Activated CD8-positive, alpha-beta memory T cell treated with anti-CD3 and anti-CD28 coated beads, Interleukin-2, amount 10 ng/mL, durations not matched to agents 7 days and 5 days (primary cell): ENCODE measurements at regions of chr6 and their contacts with region 1.

Region 1: GRCh38 chr6:31079656-31080261 is 32.6 kb downstream of the C6orf15 start:
- DNase-seq: peak; percentile 80
- ATAC-seq: peak; percentile 82
- H3K4me3 Mint-ChIP-seq: peak overlapping the region; percentile 28
- H3K27ac Mint-ChIP-seq: peak overlapping the region; percentile 43
- H3K4me1 Mint-ChIP-seq: peaks cover 3% of the 10 kb centered on the region
- H3K27me3 Mint-ChIP-seq: peaks cover 15% of the 10 kb centered on the region

Region 2: GRCh38 chr6:31068669-31069340 is 11.0 kb before region 1 on chr6:
- CTCF ChIA-PET with region 1: interaction called, 23 read pairs
- DNase-seq: peak; percentile 85
- ATAC-seq: peak; percentile 99
- H3K4me3 Mint-ChIP-seq: no peak overlapping the region
- H3K27ac Mint-ChIP-seq: no peak overlapping the region
- H3K4me1 Mint-ChIP-seq: no peaks in the 10 kb centered on the region
- H3K27me3 Mint-ChIP-seq: peaks cover 15% of the 10 kb centered on the region

Region 3: DNA sequence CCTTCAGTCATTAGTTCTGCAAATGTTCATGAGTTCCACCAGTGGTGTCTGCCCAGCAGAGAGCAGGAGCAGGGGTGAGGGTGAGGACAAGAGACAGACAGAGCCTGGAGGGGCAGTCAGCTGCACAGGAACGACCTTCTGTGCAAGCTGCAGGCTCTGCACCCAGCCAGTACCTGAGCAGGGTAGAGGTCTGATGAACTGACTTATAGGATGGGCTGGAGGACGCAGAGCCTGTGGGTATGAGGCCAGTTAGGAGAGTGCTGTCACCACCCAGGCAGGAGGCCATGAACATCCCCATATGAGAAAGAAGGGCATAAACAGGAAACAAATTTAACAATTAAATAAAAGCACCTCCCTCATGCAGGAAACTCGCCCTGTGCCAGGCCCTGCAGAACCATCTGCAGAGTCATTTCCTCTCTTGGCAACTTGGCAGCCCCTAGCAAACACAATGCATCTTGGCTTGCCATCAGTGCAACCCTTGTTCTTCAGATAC is 14.7 kb after region 1 on chr6:
- CTCF ChIA-PET with region 1: interaction called, 27 read pairs
- DNase-seq: peak; percentile 52
- ATAC-seq: peak; percentile 72
- H3K4me3 Mint-ChIP-seq: no peak overlapping the region
- H3K27ac Mint-ChIP-seq: peak overlapping the region; percentile 77
- H3K4me1 Mint-ChIP-seq: peaks cover 19% of the 10 kb centered on the region
- H3K27me3 Mint-ChIP-seq: no peaks in the 10 kb centered on the region

Region 4: DNA sequence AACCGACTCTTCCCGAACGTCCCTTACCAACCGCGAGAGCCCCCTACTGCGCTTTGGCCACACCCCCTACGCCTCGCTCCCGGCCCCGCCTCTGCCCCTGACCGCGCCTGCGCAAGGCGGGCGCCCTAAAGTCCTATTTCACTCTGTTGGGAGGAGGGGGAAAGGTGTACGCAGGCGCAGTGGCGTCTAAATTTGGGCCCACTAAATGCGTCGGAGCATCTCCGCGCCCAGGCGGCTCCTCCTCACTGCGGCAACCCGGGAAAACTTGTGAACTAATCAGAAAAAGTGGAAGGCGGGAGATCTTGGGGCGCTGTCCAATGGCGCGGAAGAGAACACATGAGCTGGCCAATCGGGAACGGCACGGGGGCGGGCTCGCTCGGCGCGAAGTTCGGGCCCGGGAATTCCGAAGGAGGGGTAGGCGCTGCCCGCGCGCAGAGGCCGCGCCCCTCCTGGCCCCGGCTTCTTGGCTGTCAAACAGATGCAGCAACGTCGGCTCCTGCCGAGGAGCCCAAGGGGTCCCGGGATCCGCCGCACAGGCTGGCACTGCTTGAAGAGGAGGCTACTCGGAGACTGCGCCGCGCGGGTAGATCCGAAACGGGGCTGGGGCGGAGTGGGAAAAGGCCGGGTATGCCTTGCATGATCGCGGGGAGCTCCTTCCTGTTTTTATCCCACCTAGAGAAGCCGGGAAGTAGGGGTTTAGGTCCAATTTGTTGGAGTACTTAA is 78.5 kb after region 1 on chr6 and contains the start of gene TCF19:
- CTCF ChIA-PET with region 1: no interaction called
- DNase-seq: peak; percentile 100
- ATAC-seq: peak; percentile 92
- H3K4me3 Mint-ChIP-seq: peak within 1 kb of the TSS; percentile 99
- H3K27ac Mint-ChIP-seq: peak within 1 kb of the TSS; percentile 84
- H3K4me1 Mint-ChIP-seq: peaks cover 42% of the 10 kb centered on the region
- H3K27me3 Mint-ChIP-seq: no peaks in the 10 kb centered on the region
- total RNA-seq, gene TCF19: 100 to 106 TPM

Region 5: GRCh38 chr6:31175971-31176370 is 96.2 kb after region 1 on chr6:
- CTCF ChIA-PET with region 1: no interaction called
- DNase-seq: no peak
- ATAC-seq: no peak
- H3K4me3 Mint-ChIP-seq: no peak overlapping the region
- H3K27ac Mint-ChIP-seq: no peak overlapping the region
- H3K4me1 Mint-ChIP-seq: peaks cover 28% of the 10 kb centered on the region
- H3K27me3 Mint-ChIP-seq: no peaks in the 10 kb centered on the region

Region 6: DNA sequence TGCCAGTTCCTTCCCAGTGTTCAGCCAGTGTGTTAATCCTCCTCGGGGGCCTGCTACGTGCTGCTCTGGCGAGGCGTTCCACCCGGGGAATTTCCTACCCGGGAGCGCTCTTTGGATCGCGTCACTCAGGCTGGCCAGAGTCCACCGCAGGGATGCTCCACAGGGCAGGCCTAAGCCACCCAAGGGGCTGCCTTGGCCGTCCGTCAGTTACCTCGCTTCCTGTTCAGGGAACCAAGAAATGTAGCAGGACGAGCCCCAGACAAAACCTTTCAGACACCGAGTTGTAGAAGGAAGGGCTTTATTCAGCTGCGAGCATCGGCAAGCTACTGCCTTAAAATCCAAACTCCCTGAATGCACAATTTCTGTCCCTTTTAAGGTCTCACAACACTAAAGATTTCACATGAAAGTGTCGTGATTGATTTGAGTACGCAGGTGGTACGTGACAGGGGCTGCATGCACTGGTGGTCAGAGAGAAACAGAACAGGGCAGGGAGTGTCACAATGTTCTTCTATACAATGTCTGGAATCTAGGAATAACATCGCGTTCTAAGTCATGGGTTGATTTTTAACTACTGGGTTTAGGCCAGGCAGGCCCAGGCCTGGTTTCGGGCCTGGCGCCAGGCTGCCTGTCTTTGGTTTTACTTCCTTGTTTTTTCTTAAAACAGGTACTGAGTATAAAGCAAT is 106.4 kb after region 1 on chr6:
- CTCF ChIA-PET with region 1: no interaction called
- DNase-seq: no peak
- ATAC-seq: no peak
- H3K4me3 Mint-ChIP-seq: no peak overlapping the region
- H3K27ac Mint-ChIP-seq: peak overlapping the region; percentile 22
- H3K4me1 Mint-ChIP-seq: peaks cover 20% of the 10 kb centered on the region
- H3K27me3 Mint-ChIP-seq: no peaks in the 10 kb centered on the region